OCI-LY7 (cell line): ENCODE measurements at regions of chr12 and their contacts with region 1.

Region 1: GRCh38 chr12:14952299-14952921 is 9.0 kb downstream of the ARHGDIB start:
- DNase-seq: peak; percentile 77
- H3K4me3 ChIP-seq: peak overlapping the region; percentile 72
- H3K27ac ChIP-seq: peak overlapping the region; percentile 97
- H3K4me1 ChIP-seq: peaks cover 99% of the 10 kb centered on the region
- CTCF ChIP-seq: no peak

Region 2: GRCh38 chr12:13289653-13290289 is 1662.6 kb before region 1 on chr12:
- CTCF ChIA-PET with region 1: no interaction called
- POLR2A ChIA-PET with region 1: no interaction called
- intact Hi-C with region 1: no loop called
- DNase-seq: no peak
- H3K4me3 ChIP-seq: no peak overlapping the region
- H3K27ac ChIP-seq: no peak overlapping the region
- H3K4me1 ChIP-seq: no peaks in the 10 kb centered on the region
- CTCF ChIP-seq: no peak

Region 3: DNA sequence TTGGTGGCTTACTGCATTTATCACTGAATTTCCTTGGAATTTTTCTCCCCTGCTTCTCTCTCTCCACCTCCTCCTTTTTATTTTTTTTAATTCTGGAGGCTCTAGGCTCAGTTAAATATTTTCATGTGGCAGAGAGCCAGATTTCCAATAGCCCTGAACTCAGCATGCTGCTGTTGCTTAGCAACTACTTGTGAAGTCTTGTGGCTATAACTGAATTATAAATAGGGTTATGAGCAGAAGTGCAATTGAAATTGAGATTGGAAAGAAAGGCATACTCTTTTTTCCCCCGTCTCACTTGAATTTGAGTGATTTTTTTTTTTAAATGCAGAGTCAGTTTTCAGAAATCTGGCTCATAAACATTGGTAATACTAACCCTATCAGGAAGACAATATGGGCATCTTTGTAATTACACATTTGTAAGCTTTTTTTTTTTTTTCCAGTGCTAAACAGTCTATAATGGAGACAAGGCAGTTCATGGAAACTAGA is 548.7 kb before region 1 on chr12:
- CTCF ChIA-PET with region 1: no interaction called
- POLR2A ChIA-PET with region 1: no interaction called
- intact Hi-C with region 1: loop called (anchors 10 kb)
- DNase-seq: peak; percentile 52
- H3K4me3 ChIP-seq: peak overlapping the region; percentile 22
- H3K27ac ChIP-seq: peak overlapping the region; percentile 29
- H3K4me1 ChIP-seq: peaks cover 26% of the 10 kb centered on the region
- CTCF ChIP-seq: no peak

Region 4: GRCh38 chr12:14884458-14884878 is 67.9 kb before region 1 on chr12:
- CTCF ChIA-PET with region 1: no interaction called
- POLR2A ChIA-PET with region 1: interaction called, 4 read pairs
- intact Hi-C with region 1: loop called (anchors 5 kb)
- DNase-seq: peak; percentile 85
- H3K4me3 ChIP-seq: peak overlapping the region; percentile 40
- H3K27ac ChIP-seq: peak overlapping the region; percentile 41
- H3K4me1 ChIP-seq: peaks cover 54% of the 10 kb centered on the region
- CTCF ChIP-seq: no peak

Region 5: DNA sequence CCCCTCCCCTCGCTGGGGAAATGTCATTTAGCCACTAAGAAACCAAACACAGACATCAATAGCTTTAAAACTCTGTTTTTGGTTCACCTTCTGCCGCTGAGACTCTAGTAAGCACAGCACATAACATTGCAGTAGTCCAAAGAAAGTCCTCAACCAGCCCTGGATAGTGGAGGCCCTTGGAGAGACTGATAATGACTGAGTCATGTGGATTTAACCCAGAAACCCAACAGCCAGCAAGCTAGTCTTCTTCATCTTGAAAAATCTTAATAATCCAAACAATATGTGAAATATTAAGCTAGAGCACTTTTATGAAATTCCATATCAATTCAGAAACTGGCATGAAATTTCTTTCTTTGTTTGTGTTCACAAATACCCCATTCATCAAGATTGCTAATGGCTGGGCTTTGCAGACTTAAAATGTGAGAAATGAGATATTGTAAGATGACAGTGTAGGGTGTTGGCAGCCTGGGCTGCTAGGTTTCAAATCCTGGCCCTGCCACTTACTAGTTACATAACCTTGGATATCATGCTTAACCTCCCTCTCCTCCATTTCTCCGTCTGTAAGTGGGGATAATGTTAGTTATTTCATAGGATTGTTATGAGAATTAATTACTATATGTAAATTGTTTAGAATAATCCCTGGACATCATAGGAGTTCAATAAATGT is 228.7 kb after region 1 on chr12:
- CTCF ChIA-PET with region 1: no interaction called
- POLR2A ChIA-PET with region 1: no interaction called
- intact Hi-C with region 1: no loop called
- DNase-seq: no peak
- H3K4me3 ChIP-seq: no peak overlapping the region
- H3K27ac ChIP-seq: no peak overlapping the region
- H3K4me1 ChIP-seq: no peaks in the 10 kb centered on the region
- CTCF ChIP-seq: no peak

Region 6: GRCh38 chr12:15882118-15882971 is 929.9 kb after region 1 on chr12 and contains the start of gene STRAP:
- CTCF ChIA-PET with region 1: no interaction called
- POLR2A ChIA-PET with region 1: no interaction called
- intact Hi-C with region 1: loop called (anchors 10 kb)
- DNase-seq: peak; percentile 94
- H3K4me3 ChIP-seq: peak within 1 kb of the TSS; percentile 94
- H3K27ac ChIP-seq: peak within 1 kb of the TSS; percentile 66
- H3K4me1 ChIP-seq: peaks cover 18% of the 10 kb centered on the region
- CTCF ChIP-seq: no peak
- total RNA-seq, gene STRAP: 43.1 and 45.5 TPM in 2 replicates